ENCODE measurements at regions of chr18 and their contacts with region 1.

Region 1: GRCh38 chr18:21203096-21203495 is 38.9 kb upstream of the GREB1L start:
- DNase-seq: no peak
- H3K4me3 ChIP-seq: no peak overlapping the region
- CTCF ChIP-seq: no peak

Region 2: DNA sequence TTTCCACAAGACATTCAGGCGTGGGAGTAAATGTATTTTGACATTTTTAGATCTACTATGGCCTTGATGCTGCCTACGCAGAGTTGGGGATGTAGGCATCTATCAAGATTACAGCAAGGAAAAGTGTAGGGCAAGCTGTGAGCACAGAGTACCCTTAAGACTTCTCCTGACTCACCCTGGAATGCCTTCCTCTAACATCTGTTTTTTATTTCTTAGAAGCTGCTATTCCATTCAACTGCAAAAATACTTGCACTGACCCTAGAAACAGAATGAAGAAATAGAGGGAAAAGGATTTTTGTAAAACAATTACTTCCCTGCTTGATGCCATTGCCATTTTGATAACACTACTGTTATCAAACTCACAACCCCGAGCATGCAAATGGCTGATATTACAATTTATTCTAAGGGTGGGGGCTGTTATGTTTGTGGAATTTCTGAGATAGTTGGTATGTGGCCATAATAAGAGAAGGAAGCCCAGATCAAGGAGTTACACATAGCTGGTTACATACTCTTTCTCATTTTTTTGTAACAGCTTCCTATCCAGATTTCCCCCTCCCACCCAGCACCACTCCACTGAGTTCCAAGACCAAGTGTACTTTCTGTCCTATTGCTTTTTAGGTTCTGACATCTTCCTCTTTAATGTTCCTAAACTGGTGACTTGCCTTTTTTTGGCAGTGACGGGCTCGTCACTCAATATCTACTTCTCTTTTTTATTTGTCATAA is 85.5 kb before region 1 on chr18:
- in situ Hi-C with region 1: no loop called
- DNase-seq: peak; percentile 46
- H3K4me3 ChIP-seq: no peak overlapping the region
- CTCF ChIP-seq: no peak

Region 3: DNA sequence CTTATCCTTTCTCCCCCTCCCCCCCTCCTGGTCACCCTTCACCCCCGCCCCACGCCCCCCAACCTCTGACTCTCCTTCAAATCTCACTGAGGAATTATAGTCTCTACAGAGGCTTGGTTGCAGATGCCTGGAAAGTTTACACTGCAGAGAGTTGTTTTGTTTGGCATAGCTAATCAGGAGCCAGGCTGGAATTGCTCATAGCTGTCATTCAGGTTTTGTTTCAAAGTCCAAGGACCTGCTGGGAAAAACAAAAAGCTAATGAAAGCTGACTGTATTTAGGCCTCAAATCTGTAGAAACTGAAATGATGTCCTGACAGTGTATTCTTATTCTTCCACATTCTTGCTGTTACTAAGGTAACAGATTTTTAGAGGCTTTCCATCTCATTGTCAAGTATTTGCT is 61.6 kb after region 1 on chr18:
- in situ Hi-C with region 1: loop called (anchors 10 kb)
- DNase-seq: peak; percentile 36
- H3K4me3 ChIP-seq: no peak overlapping the region
- CTCF ChIP-seq: no peak

Region 4: DNA sequence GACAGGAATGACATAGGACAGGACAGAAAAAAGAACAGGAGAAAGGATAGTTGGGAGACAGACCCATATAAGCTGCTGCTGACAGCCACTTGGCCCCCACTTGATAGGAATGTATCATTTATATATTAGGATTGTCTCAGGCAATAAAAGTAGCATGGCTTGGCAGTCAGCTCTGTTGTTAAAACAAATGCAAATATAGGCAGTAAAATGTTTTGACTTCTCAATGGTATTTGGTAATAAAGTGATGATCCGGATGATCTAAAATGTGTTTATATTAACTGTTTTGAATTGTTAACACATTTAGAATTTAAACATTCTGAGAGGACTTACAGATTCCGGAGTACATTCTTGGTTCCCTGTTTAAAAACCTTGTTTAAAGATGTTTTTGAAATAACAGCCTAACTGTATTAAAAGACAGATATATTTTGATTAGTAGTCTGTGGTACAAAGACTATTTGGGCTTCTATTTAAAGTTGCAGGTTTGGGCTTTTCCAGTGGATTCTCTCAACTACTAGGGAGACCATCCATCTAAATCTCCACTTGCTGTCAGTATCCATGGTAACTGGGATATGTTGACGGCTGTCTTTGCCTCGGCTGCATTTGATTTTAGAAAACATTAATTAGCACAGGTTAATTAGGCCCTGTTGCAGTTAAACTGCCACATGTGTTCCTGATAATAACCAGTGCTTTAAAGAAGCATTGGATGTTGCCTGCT is 249.9 kb after region 1 on chr18:
- in situ Hi-C with region 1: loop called (anchors 5 kb)
- DNase-seq: no peak
- H3K4me3 ChIP-seq: no peak overlapping the region
- CTCF ChIP-seq: no peak

Measured in astrocyte of the cerebellum (primary cell).